ENCODE measurements at regions of chr2 and their contacts with region 1.

Region 1: GRCh38 chr2:10408649-10409579 is 39.2 kb downstream of the ODC1 start:
- DNase-seq: peak; percentile 91
- ATAC-seq: peak; percentile 65
- H3K4me3 Mint-ChIP-seq: peak overlapping the region; percentile 60
- H3K27ac Mint-ChIP-seq: peak overlapping the region; percentile 99
- H3K4me1 Mint-ChIP-seq: peaks cover 63% of the 10 kb centered on the region
- H3K27me3 Mint-ChIP-seq: no peaks in the 10 kb centered on the region

Region 2: DNA sequence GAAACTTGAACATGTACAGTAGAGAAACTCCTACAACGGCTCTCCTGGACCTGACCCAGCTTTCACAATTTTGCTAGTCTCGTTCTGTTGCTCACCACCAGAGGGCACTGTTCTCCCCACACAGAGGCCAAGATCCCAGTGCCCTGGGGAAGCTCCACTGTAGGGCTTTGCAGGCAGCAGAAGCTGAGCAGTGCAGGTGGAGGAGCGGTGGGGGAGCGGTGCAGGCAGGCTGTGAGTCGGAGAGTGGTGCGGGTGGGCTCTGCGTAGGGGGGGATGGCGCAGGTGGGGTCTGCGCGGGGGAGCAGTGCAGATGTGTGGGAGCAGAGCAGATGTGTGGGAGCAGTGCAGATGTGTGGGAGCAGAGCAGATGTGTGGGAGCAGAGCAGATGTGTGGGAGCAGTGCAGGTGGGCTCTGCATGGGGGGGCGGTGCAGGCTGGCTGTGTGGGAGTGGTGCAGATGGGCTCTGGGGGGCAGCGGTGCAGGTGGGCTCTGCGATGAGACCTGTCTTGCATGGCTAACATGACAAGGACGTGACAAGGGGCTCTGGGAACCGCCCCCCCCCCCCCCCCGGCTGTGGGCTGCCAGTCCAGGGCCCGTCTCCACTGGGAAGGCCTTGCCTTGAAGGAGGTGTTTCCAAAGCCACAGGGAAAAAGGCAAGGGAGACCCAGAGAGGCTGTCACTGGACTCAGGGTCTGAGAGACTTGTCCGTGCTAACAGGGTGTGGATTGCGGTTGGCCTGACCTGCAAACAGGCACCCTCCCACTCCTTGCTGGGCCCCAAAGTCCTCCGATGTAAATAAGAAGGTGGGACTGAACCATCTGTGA is 336.0 kb before region 1 on chr2:
- CTCF ChIA-PET with region 1: interaction called, 38 read pairs
- POLR2A ChIA-PET with region 1: no interaction called
- intact Hi-C with region 1: loop called (anchors 1 kb)
- DNase-seq: peak; percentile 86
- ATAC-seq: peak; percentile 97
- H3K4me3 Mint-ChIP-seq: no peak overlapping the region
- H3K27ac Mint-ChIP-seq: no peak overlapping the region
- H3K4me1 Mint-ChIP-seq: no peaks in the 10 kb centered on the region
- H3K27me3 Mint-ChIP-seq: peaks cover 38% of the 10 kb centered on the region

Region 3: GRCh38 chr2:10141736-10142642 is 266.9 kb before region 1 on chr2:
- CTCF ChIA-PET with region 1: interaction called, 31 read pairs
- POLR2A ChIA-PET with region 1: no interaction called
- intact Hi-C with region 1: loop called (anchors 1 kb)
- DNase-seq: peak; percentile 67
- ATAC-seq: peak; percentile 74
- H3K4me3 Mint-ChIP-seq: no peak overlapping the region
- H3K27ac Mint-ChIP-seq: no peak overlapping the region
- H3K4me1 Mint-ChIP-seq: peaks cover 26% of the 10 kb centered on the region
- H3K27me3 Mint-ChIP-seq: no peaks in the 10 kb centered on the region

Region 4: GRCh38 chr2:10302479-10303180 is 106.3 kb before region 1 on chr2 and contains the start of gene HPCAL1:
- CTCF ChIA-PET with region 1: interaction called, 78 read pairs
- POLR2A ChIA-PET with region 1: interaction called, 10 read pairs
- intact Hi-C with region 1: loop called (anchors 1 kb)
- DNase-seq: peak; percentile 91
- ATAC-seq: peak; percentile 72
- H3K4me3 Mint-ChIP-seq: peak within 1 kb of the TSS; percentile 100
- H3K27ac Mint-ChIP-seq: peak within 1 kb of the TSS; percentile 89
- H3K4me1 Mint-ChIP-seq: peaks cover 65% of the 10 kb centered on the region
- H3K27me3 Mint-ChIP-seq: no peaks in the 10 kb centered on the region
- total RNA-seq, gene HPCAL1: 109 to 114 TPM

Region 5: GRCh38 chr2:10382354-10383061 is 26.4 kb before region 1 on chr2:
- CTCF ChIA-PET with region 1: interaction called, 17 read pairs
- POLR2A ChIA-PET with region 1: interaction called, 4 read pairs
- intact Hi-C with region 1: loop called in 1 of 2 experiments (anchors 2 kb)
- DNase-seq: peak; percentile 46
- ATAC-seq: peak; percentile 68
- H3K4me3 Mint-ChIP-seq: peak overlapping the region; percentile 15
- H3K27ac Mint-ChIP-seq: peak overlapping the region; percentile 69
- H3K4me1 Mint-ChIP-seq: peaks cover 91% of the 10 kb centered on the region
- H3K27me3 Mint-ChIP-seq: no peaks in the 10 kb centered on the region

Region 6: DNA sequence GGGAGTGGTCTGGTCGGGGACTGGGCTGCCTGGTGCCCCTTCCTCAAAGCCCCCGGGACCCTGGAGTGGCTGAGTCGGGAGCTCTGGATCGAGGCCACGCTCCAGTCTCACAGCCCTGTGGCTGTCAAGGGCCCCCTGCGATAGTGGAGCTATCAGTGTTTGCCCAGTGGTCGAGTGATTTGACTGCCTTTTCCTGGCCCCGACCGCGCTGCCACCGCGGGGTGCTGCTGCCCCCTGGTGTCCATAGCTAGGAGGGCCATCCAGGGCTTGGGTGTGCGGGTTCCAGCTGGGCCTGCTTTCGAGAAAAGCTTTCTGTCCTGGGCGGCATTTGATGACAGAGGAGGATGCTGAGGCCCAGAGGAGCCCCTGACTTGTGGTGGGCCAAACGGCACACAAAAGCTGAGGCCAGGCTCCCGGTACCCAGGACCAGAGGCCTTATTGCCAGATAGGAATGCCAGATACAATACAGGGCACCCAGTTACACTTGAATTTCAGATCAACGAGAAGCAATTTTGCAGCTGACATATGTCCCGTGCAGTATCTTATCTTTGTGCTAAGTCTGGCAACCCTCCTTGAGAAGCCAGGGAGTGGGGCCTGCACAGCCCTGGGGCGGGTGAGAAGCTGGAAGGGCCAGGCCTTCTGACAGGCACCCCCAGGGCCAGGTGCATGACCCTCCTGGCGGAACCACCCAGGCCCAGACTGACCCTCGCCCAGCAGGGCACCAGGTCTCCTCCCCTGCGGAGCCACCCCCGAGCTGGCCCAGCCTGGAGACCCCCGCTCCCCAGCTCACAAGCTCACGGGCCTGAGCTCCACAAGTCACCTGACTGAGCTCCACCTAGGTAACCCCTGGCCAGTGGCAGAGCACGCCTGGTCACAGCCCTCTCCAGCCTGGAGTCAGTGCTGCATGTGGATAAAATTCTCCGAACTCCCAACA is 26.2 kb after region 1 on chr2:
- CTCF ChIA-PET with region 1: interaction called, 36 read pairs
- POLR2A ChIA-PET with region 1: interaction called, 6 read pairs
- intact Hi-C with region 1: loop called in 1 of 2 experiments (anchors 1 kb)
- DNase-seq: peak; percentile 85
- ATAC-seq: peak; percentile 56
- H3K4me3 Mint-ChIP-seq: no peak overlapping the region
- H3K27ac Mint-ChIP-seq: no peak overlapping the region
- H3K4me1 Mint-ChIP-seq: peaks cover 11% of the 10 kb centered on the region
- H3K27me3 Mint-ChIP-seq: peaks cover 6% of the 10 kb centered on the region

Region 7: GRCh38 chr2:10521356-10522345 is 112.7 kb after region 1 on chr2:
- CTCF ChIA-PET with region 1: no interaction called
- POLR2A ChIA-PET with region 1: no interaction called
- intact Hi-C with region 1: no loop called
- DNase-seq: no peak
- ATAC-seq: no peak
- H3K4me3 Mint-ChIP-seq: no peak overlapping the region
- H3K27ac Mint-ChIP-seq: no peak overlapping the region
- H3K4me1 Mint-ChIP-seq: no peaks in the 10 kb centered on the region
- H3K27me3 Mint-ChIP-seq: no peaks in the 10 kb centered on the region